ENCODE measurements at regions of chr12 and their contacts with region 1.

Region 1: GRCh38 chr12:122064025-122064777 is 14.4 kb upstream of the MLXIP start:
- DNase-seq: peak in 4 of 9 donors; percentile 13 to 37 (median 29)
- ATAC-seq: peak; percentile 80
- H3K4me3 ChIP-seq: no peak overlapping the region
- H3K4me3 Mint-ChIP-seq: no peak overlapping the region
- H3K27ac ChIP-seq: no peak overlapping the region
- H3K27ac Mint-ChIP-seq: peak overlapping the region in 2 of 9 donors; percentile 18 to 83
- H3K4me1 ChIP-seq: peaks cover 11 to 12% of the 10 kb centered on the region in 2 donors
- H3K4me1 Mint-ChIP-seq: peaks cover 19 to 29% (median 24%) of the 10 kb centered on the region in 7 donors
- H3K27me3 ChIP-seq: no peaks in the 10 kb centered on the region
- H3K27me3 Mint-ChIP-seq: peaks cover 0 to 1% (median 0%) of the 10 kb centered on the region in 5 donors

Region 2: DNA sequence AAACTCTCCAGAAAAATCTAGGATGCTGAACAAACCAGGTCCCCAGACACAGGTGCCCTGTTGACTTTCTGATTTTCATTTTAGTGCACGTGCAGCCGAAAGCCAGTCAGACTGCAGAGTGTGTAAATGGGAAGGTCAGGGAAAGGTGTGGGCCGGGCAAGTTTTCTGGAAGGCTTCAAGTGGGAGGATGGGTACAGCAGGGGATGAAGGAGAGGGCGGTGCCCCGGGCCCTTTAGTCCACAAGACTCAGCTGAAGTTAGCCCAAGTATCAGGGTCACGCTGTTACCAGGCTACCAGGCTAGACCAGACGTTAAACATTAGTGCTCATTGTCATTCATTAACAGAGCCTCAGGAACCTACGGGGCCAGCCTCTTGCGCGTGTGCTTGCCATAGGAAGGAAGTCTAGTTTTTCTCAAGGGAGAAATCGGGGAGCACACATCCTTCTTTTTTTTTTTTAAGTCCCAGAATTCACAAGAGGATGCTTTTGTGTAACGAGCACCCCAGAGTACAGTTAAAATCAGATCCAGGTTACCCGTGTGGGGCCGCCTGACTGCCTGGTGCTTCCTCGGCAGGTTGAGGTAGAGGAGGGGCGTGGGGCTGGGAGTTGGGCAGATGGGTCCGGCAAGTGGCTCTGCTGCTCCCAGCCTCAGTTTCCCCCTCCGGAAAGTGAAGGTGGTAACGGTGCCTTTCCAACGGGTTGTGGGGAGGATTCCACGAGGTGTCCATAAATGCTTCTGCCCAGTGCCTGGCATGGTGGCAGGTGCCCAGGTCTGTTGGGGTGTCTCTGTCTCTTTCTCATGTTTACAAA is 23.4 kb before region 1 on chr12:
- CTCF ChIA-PET with region 1: no interaction called
- POLR2A ChIA-PET with region 1: no interaction called
- intact Hi-C with region 1: no loop called
- DNase-seq: no peak
- ATAC-seq: no peak
- H3K4me3 ChIP-seq: no peak overlapping the region
- H3K4me3 Mint-ChIP-seq: no peak overlapping the region
- H3K27ac ChIP-seq: no peak overlapping the region
- H3K27ac Mint-ChIP-seq: peak overlapping the region in 1 of 9 donors; percentile 20
- H3K4me1 ChIP-seq: no peaks in the 10 kb centered on the region
- H3K4me1 Mint-ChIP-seq: no peaks in the 10 kb centered on the region
- H3K27me3 ChIP-seq: no peaks in the 10 kb centered on the region
- H3K27me3 Mint-ChIP-seq: no peaks in the 10 kb centered on the region

Region 3: DNA sequence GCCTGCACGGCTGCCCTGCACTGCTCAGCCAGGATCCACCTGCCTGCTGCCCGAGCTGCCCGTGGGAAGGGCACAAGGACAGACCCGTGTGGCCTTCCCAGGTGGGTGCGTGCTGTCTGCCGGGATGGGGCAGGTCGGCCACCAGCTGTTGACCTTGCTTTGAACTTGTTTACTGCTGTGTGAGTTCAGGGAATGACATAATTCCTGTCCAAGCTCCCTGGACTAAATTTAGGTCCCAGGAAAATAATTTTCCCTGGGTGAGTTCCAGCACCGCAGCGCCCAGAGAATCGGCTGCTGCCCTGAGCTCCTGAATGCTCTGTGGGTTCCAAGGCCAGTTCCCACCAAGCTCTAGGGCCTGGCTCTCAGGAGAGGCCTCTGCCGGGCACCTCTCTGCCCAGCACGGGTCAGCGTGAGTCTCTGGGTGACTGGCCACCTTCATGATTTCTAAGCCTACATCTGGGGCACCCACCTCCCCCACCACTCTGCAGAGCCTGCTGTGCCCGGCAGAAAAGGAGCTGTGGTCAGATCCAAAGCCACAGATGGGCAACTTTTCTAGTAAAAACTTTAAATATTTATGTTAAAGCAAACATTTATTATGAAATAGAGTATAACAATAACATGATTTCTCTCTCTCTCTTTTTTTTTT is 12.8 kb before region 1 on chr12:
- CTCF ChIA-PET with region 1: interaction called, 11 read pairs
- POLR2A ChIA-PET with region 1: interaction called, 3 read pairs
- intact Hi-C with region 1: no loop called
- DNase-seq: no peak
- ATAC-seq: no peak
- H3K4me3 ChIP-seq: no peak overlapping the region
- H3K4me3 Mint-ChIP-seq: no peak overlapping the region
- H3K27ac ChIP-seq: no peak overlapping the region
- H3K27ac Mint-ChIP-seq: no peak overlapping the region
- H3K4me1 ChIP-seq: no peaks in the 10 kb centered on the region
- H3K4me1 Mint-ChIP-seq: peaks cover 0 to 7% (median 5%) of the 10 kb centered on the region in 7 donors
- H3K27me3 ChIP-seq: no peaks in the 10 kb centered on the region
- H3K27me3 Mint-ChIP-seq: no peaks in the 10 kb centered on the region

Region 4: GRCh38 chr12:122107261-122107660 is 43.1 kb after region 1 on chr12:
- CTCF ChIA-PET with region 1: no interaction called
- POLR2A ChIA-PET with region 1: interaction called, 4 read pairs
- intact Hi-C with region 1: loop called in 1 of 2 experiments (anchors 5 kb)
- DNase-seq: no peak
- ATAC-seq: no peak
- H3K4me3 ChIP-seq: no peak overlapping the region
- H3K4me3 Mint-ChIP-seq: peak overlapping the region in 7 of 10 donors; percentile 13 to 68 (median 38)
- H3K27ac ChIP-seq: no peak overlapping the region
- H3K27ac Mint-ChIP-seq: peak overlapping the region in 5 of 9 donors; percentile 79 to 93 (median 88)
- H3K4me1 ChIP-seq: peaks cover 14 to 44% of the 10 kb centered on the region in 2 donors
- H3K4me1 Mint-ChIP-seq: peaks cover 58 to 88% (median 79%) of the 10 kb centered on the region in 7 donors
- H3K27me3 ChIP-seq: no peaks in the 10 kb centered on the region
- H3K27me3 Mint-ChIP-seq: no peaks in the 10 kb centered on the region